Activated B cell treated with CpG ODN at 0.5 μM for 24 hours (primary cell): ENCODE measurements at regions of chr21 and their contacts with region 1.

Region 1: GRCh38 chr21:26686278-26686677 is 113.2 kb upstream of the CYYR1 start:
- DNase-seq: no peak
- ATAC-seq: peak; percentile 57
- H3K4me3 Mint-ChIP-seq: no peak overlapping the region
- H3K27ac Mint-ChIP-seq: no peak overlapping the region
- H3K4me1 Mint-ChIP-seq: no peaks in the 10 kb centered on the region
- H3K27me3 Mint-ChIP-seq: no peaks in the 10 kb centered on the region
- CTCF ChIP-seq: no peak

Region 2: DNA sequence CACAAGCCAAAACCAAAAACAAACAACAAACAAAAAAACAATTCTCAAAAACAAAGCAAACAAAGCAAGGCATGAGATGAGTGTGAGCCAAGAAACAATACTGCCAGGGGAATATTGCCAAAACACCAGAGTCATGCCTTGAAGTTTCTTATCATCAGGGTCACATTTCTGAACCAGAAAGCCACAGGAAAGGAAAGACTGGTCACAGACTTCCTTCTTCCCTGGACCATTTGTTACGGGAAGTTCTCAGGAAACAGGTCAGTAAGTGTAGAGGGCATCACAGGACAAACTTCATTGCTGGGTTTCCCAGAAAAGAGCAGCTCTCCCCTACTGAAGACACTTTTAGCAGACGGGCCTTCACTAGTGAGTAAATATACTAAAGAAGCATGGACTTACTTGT is 760.3 kb before region 1 on chr21:
- CTCF ChIA-PET with region 1: no interaction called
- POLR2A ChIA-PET with region 1: no interaction called
- intact Hi-C with region 1: no loop called
- DNase-seq: no peak
- ATAC-seq: no peak
- H3K4me3 Mint-ChIP-seq: no peak overlapping the region
- H3K27ac Mint-ChIP-seq: no peak overlapping the region
- H3K4me1 Mint-ChIP-seq: no peaks in the 10 kb centered on the region
- H3K27me3 Mint-ChIP-seq: no peaks in the 10 kb centered on the region
- CTCF ChIP-seq: no peak

Region 3: DNA sequence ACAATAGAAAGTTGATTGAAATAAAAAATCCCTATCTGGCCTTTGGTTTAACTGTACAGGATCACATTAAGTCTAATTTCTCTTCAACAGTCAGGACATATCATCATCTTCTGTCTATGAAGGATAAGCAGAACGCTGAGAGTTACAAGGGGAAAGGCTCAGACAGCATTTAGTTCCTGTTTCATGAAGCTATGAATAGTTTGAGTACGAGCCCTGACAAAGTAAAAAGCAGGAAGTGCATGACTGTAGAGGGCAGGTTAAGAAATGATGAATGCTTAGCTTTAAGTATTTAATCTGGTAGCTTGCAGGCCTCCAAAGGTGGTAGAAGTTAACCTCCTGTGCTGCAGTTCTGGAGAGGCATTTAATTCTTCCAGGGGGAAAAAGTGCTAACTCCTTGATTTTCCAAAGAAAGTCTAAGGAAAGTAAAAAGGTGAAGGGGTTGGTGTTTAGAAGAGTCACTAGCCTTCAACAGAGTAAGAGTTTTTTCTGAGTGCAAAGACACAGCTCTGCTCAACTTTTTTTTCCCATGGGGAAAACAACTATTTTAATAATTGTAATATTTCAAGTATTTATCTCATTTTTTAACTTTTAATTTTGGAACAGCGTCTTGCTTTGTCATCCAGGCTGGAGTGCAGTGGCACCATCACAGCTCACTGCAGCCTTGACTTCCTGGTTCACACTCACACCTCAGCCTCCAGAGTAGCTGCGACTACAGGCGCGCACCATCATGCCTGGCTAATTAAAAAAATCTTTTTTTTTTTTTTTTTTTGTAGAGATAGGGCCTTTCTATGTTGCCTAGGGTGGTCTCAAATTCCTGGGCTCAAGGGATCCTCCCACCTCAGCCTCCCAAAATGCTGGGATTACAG is 718.5 kb before region 1 on chr21:
- CTCF ChIA-PET with region 1: no interaction called
- POLR2A ChIA-PET with region 1: no interaction called
- intact Hi-C with region 1: loop called (anchors 5 kb)
- DNase-seq: no peak
- ATAC-seq: peak; percentile 95
- H3K4me3 Mint-ChIP-seq: peak overlapping the region; percentile 24
- H3K27ac Mint-ChIP-seq: peak overlapping the region; percentile 93
- H3K4me1 Mint-ChIP-seq: peaks cover 32% of the 10 kb centered on the region
- H3K27me3 Mint-ChIP-seq: no peaks in the 10 kb centered on the region
- CTCF ChIP-seq: no peak

Region 4: GRCh38 chr21:26583769-26584168 is 102.5 kb before region 1 on chr21:
- CTCF ChIA-PET with region 1: no interaction called
- POLR2A ChIA-PET with region 1: no interaction called
- intact Hi-C with region 1: no loop called
- DNase-seq: no peak
- ATAC-seq: no peak
- H3K4me3 Mint-ChIP-seq: no peak overlapping the region
- H3K27ac Mint-ChIP-seq: no peak overlapping the region
- H3K4me1 Mint-ChIP-seq: no peaks in the 10 kb centered on the region
- H3K27me3 Mint-ChIP-seq: no peaks in the 10 kb centered on the region
- CTCF ChIP-seq: no peak

Region 5: GRCh38 chr21:26753822-26754221 is 67.5 kb after region 1 on chr21:
- CTCF ChIA-PET with region 1: no interaction called
- POLR2A ChIA-PET with region 1: no interaction called
- intact Hi-C with region 1: no loop called
- DNase-seq: no peak
- ATAC-seq: no peak
- H3K4me3 Mint-ChIP-seq: no peak overlapping the region
- H3K27ac Mint-ChIP-seq: no peak overlapping the region
- H3K4me1 Mint-ChIP-seq: no peaks in the 10 kb centered on the region
- H3K27me3 Mint-ChIP-seq: no peaks in the 10 kb centered on the region
- CTCF ChIP-seq: no peak